HCT116 (cell line): ENCODE measurements at regions of chr20 and their contacts with region 1.

Region 1: GRCh38 chr20:16801919-16802911 is 54.1 kb downstream of the OTOR start:
- DNase-seq: peak; percentile 56
- ATAC-seq: peak; percentile 78
- H3K4me3 ChIP-seq: no peak overlapping the region
- H3K27ac ChIP-seq: no peak overlapping the region
- H3K4me1 ChIP-seq: no peaks in the 10 kb centered on the region
- H3K27me3 ChIP-seq: peaks cover 38% of the 10 kb centered on the region
- CTCF ChIP-seq: peak; percentile 55 to 93 (median 86); a peak in 5 of 6 replicates
- POLR2A ChIP-seq: no peak
- RAD21 ChIP-seq: peak; percentile 75

Region 2: GRCh38 chr20:16709017-16709416 is 93.2 kb before region 1 on chr20:
- CTCF ChIA-PET with region 1: no interaction called
- POLR2A ChIA-PET with region 1: no interaction called
- RAD21 ChIA-PET with region 1: no interaction called
- intact Hi-C with region 1: no loop called
- DNase-seq: no peak
- ATAC-seq: no peak
- H3K4me3 ChIP-seq: no peak overlapping the region
- H3K27ac ChIP-seq: no peak overlapping the region
- H3K4me1 ChIP-seq: no peaks in the 10 kb centered on the region
- H3K27me3 ChIP-seq: peaks cover 15% of the 10 kb centered on the region; the same call in 1 of the 2 replicates
- CTCF ChIP-seq: no peak
- POLR2A ChIP-seq: no peak
- RAD21 ChIP-seq: no peak

Region 3: GRCh38 chr20:16922834-16923233 is 120.6 kb after region 1 on chr20:
- CTCF ChIA-PET with region 1: no interaction called
- POLR2A ChIA-PET with region 1: no interaction called
- RAD21 ChIA-PET with region 1: no interaction called
- intact Hi-C with region 1: no loop called
- DNase-seq: no peak
- ATAC-seq: no peak
- H3K4me3 ChIP-seq: no peak overlapping the region
- H3K27ac ChIP-seq: no peak overlapping the region
- H3K4me1 ChIP-seq: no peaks in the 10 kb centered on the region
- H3K27me3 ChIP-seq: no peaks in the 10 kb centered on the region
- CTCF ChIP-seq: no peak
- POLR2A ChIP-seq: no peak
- RAD21 ChIP-seq: no peak

Region 4: DNA sequence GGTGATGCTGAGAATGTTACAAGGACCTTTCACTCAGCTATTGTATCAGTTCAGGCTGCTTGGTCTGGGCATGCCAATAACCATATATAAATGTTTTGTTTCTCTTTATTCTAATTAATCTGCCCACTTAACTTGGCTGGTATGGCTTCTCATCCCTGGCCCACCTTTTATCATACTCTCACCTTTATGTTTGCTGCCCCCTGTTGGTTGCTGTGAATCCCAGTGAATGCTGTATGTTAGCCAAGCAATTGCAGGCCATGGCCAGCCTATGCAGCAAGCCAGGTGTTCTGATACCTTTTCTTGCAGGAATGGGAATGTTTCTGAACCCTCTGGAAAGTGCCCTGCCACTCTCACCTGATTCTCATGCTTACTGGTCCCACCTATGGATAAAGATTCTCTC is 479.3 kb after region 1 on chr20:
- CTCF ChIA-PET with region 1: interaction called, 3 read pairs
- POLR2A ChIA-PET with region 1: no interaction called
- RAD21 ChIA-PET with region 1: no interaction called
- intact Hi-C with region 1: loop called (anchors 2 kb)
- DNase-seq: peak; percentile 3
- ATAC-seq: 0 out of 2 replicates have a peak, but pooled peaks have one; percentile 57
- H3K4me3 ChIP-seq: no peak overlapping the region
- H3K27ac ChIP-seq: no peak overlapping the region
- H3K4me1 ChIP-seq: no peaks in the 10 kb centered on the region
- H3K27me3 ChIP-seq: peaks cover 22% of the 10 kb centered on the region
- CTCF ChIP-seq: peak in 2 of 3 experiments; percentile 33 to 47; a peak in 3 of 6 replicates
- POLR2A ChIP-seq: no peak
- RAD21 ChIP-seq: 0 out of 2 replicates have a peak, but pooled peaks have one; percentile 16

Region 5: DNA sequence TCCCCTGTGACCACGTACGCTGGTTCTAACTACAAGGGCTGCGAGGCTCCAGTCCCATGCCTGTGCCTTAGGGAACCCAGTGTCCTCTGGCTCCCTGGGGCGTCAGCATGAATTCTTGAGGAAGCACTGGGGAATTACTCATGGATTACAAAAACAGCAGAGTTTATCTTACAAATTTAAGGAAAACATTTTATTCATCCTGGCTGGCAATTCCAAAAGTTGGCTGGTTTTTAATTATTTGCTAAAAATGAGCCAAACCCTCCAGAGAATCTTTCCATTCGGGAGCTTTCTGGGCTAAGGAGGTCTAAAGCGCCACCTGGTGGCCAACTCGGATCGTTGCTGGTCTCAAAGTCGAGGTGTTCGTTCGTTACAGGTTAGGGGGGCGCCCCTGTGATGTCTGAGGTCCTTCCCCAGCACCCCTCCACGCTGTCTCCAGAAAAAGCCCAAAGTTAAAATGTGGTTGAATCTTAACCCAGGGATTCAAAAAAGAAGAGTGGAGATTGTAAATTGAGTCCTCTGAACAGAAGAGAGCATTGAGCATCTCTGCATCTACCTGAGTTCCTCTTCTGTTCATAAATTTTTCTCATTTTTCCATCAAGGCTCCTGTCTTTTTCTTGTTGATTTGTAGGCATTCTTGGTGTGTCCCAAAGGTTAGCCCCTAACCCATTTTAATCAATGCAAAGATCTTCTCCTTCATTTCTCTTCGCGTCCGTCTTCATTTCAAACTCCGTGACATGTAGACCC is 629.6 kb after region 1 on chr20:
- CTCF ChIA-PET with region 1: interaction called, 65 read pairs
- POLR2A ChIA-PET with region 1: no interaction called
- RAD21 ChIA-PET with region 1: interaction called in 1 of 2 experiments, 7 read pairs
- intact Hi-C with region 1: loop called (anchors 1 kb)
- DNase-seq: peak; percentile 19
- ATAC-seq: peak; percentile 80
- H3K4me3 ChIP-seq: no peak overlapping the region
- H3K27ac ChIP-seq: no peak overlapping the region
- H3K4me1 ChIP-seq: no peaks in the 10 kb centered on the region
- H3K27me3 ChIP-seq: peaks cover 17% of the 10 kb centered on the region
- CTCF ChIP-seq: peak; percentile 68 to 94 (median 86); a peak in 5 of 6 replicates
- POLR2A ChIP-seq: no peak
- RAD21 ChIP-seq: peak; percentile 74

Region 6: DNA sequence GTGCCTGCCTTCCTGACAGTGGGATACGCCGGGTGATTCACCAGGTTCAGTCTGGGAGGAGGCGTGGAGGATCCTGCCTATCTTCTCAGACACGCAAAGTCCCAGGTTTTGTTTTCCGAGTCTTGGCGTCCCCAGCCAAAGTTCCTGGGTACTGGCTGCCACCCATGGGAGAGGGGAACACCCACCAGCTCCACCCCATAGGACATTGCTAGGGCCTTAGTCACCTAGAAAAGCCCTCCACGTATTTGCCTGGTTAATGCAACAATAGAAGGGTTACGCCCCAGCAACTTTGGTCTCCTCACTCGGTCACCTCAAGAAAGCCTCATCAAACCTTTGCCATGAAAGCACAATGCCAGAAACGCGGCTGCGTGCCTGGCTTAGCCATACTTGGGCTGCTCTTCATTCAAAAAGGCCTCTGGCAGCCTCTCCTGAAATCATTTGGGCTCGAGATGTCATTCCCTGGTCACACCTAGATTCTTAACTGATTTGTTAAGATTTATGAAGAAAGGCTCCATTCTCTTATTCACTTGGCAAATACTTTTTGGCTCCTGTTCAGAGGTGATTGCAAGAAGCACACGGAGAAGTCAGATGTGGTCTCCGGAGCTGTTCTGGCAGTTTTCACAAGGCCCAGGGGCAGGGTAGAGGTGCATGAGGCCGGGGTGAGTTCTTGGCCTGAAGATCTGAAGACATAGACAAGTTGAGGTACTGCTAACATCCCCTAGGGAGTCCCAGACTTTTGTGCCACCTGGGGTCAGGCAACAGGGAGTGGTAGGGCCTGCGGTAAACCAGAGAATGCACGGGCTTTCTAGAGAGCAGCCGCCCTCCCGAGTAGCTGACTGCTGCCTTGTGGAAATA is 1450.6 kb after region 1 on chr20:
- CTCF ChIA-PET with region 1: no interaction called
- POLR2A ChIA-PET with region 1: no interaction called
- RAD21 ChIA-PET with region 1: no interaction called
- intact Hi-C with region 1: no loop called
- DNase-seq: peak; percentile 73
- ATAC-seq: peak; percentile 90
- H3K4me3 ChIP-seq: peak overlapping the region; percentile 22 to 54
- H3K27ac ChIP-seq: peak overlapping the region; percentile 56
- H3K4me1 ChIP-seq: peaks cover 13 to 27% of the 10 kb centered on the region in 2 experiments
- H3K27me3 ChIP-seq: no peaks in the 10 kb centered on the region
- CTCF ChIP-seq: no peak
- POLR2A ChIP-seq: no peak
- RAD21 ChIP-seq: no peak; the same call in 1 of the 2 replicates